ENCODE measurements at regions of chr7 and their contacts with region 1.

Region 1: GRCh38 chr7:21345361-21345760 is 82.5 kb upstream of the SP4 start:
- DNase-seq: peak; percentile 87
- ATAC-seq: peak; percentile 77
- H3K4me3 ChIP-seq: no peak overlapping the region
- H3K27ac ChIP-seq: peak overlapping the region; percentile 83
- H3K4me1 ChIP-seq: peaks cover 27% of the 10 kb centered on the region
- H3K27me3 ChIP-seq: no peaks in the 10 kb centered on the region
- CTCF ChIP-seq: no peak
- EP300 ChIP-seq: no peak
- POLR2A ChIP-seq: no peak
- RAD21 ChIP-seq: peak; percentile 23; the same call in 1 of the 2 replicates

Region 2: DNA sequence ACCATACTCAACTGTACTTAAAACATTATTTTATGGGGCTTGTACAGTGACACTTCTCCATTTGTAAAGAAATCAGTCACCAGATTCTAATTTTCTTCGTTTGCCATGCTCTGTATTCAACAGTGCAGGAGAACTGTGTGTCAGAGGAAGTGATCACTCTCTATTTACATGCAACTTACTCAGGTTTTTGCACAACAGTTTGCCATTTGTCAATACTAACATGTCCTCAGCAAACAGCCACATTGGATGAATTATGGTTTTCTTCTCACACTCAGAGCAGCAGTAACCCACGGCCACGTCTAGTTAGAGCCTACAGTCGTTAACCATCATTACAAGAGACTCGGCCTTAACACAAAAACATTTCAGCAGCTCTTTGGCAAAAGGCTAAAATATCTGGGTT is 13.3 kb after region 1 on chr7:
- CTCF ChIA-PET with region 1: interaction called, 5 read pairs
- POLR2A ChIA-PET with region 1: interaction called, 5 read pairs
- RAD21 ChIA-PET with region 1: interaction called, 18 read pairs
- SMC1A ChIA-PET with region 1: interaction called, 34 read pairs
- in situ Hi-C with region 1: no loop called
- intact Hi-C with region 1: no loop called
- DNase-seq: no peak
- ATAC-seq: no peak
- H3K4me3 ChIP-seq: no peak overlapping the region
- H3K27ac ChIP-seq: no peak overlapping the region; the same call in 1 of the 2 replicates
- H3K4me1 ChIP-seq: peaks cover 38% of the 10 kb centered on the region
- H3K27me3 ChIP-seq: no peaks in the 10 kb centered on the region
- CTCF ChIP-seq: no peak
- EP300 ChIP-seq: no peak
- POLR2A ChIP-seq: no peak
- RAD21 ChIP-seq: no peak

Region 3: GRCh38 chr7:21365866-21366624 is 20.7 kb after region 1 on chr7:
- CTCF ChIA-PET with region 1: interaction called, 3 read pairs
- POLR2A ChIA-PET with region 1: interaction called, 5 read pairs
- RAD21 ChIA-PET with region 1: interaction called, 9 read pairs
- SMC1A ChIA-PET with region 1: interaction called, 23 read pairs
- in situ Hi-C with region 1: no loop called
- intact Hi-C with region 1: no loop called
- DNase-seq: no peak
- ATAC-seq: no peak
- H3K4me3 ChIP-seq: no peak overlapping the region
- H3K27ac ChIP-seq: no peak overlapping the region; the same call in 1 of the 2 replicates
- H3K4me1 ChIP-seq: peaks cover 21% of the 10 kb centered on the region
- H3K27me3 ChIP-seq: no peaks in the 10 kb centered on the region
- CTCF ChIP-seq: no peak
- EP300 ChIP-seq: no peak
- POLR2A ChIP-seq: no peak
- RAD21 ChIP-seq: no peak